ENCODE measurements at regions of chr3 and their contacts with region 1.

Region 1: DNA sequence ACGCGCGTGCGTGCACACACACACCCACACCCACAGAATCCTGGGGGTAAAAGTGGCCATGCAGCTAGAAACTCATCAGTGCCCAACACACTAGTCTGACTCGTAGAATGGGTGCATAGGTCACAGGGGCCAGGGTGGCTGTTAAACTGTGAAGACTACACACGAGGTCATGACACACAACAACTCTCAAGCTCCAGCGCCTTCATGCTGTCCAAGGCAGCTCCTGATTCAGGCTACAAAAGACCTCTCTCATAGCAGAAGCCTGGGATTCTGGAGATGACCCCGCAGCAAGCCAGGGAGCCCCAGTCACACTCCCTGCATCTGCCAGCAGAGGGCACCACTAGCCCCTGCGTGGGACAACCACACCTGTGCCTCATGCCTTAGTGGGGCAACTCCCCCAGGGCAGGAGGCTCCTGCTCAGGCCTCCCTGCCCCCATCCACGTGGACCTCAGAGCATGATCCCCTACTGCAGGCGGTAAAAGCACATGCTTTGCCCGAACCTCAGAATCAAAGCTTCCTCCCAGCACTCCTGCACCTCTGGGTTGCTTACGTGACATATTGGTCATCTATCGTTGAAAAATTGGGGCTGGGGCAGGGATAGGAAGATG is 93.1 kb downstream of the LRIG1 start:
- DNase-seq: peak; percentile 76 to 97
- H3K4me3 ChIP-seq: no peak overlapping the region
- H3K27ac ChIP-seq: no peak overlapping the region
- H3K4me1 ChIP-seq: peaks cover 0 to 12% (median 7%) of the 10 kb centered on the region in 4 experiments; a peak in 4 of 7 replicates
- H3K27me3 ChIP-seq: no peaks in the 10 kb centered on the region
- CTCF ChIP-seq: peak in 2 of 3 experiments; percentile 86 to 94; a peak in 3 of 4 replicates
- EP300 ChIP-seq: no peak
- POLR2A ChIP-seq: no peak
- RAD21 ChIP-seq: peak; percentile 92 to 93

Region 2: GRCh38 chr3:66362541-66362941 is 45.2 kb before region 1 on chr3:
- CTCF ChIA-PET with region 1: no interaction called
- POLR2A ChIA-PET with region 1: no interaction called
- DNase-seq: no peak
- H3K4me3 ChIP-seq: no peak overlapping the region
- H3K27ac ChIP-seq: no peak overlapping the region
- H3K4me1 ChIP-seq: peaks cover 3 to 11% (median 5%) of the 10 kb centered on the region in 4 experiments; a peak in 5 of 7 replicates
- H3K27me3 ChIP-seq: no peaks in the 10 kb centered on the region
- CTCF ChIP-seq: no peak
- EP300 ChIP-seq: no peak
- POLR2A ChIP-seq: no peak
- RAD21 ChIP-seq: no peak

Region 3: GRCh38 chr3:66378256-66378823 is 29.4 kb before region 1 on chr3:
- CTCF ChIA-PET with region 1: interaction called, 11 read pairs
- POLR2A ChIA-PET with region 1: no interaction called
- DNase-seq: peak in 1 of 2 experiments; percentile 15
- H3K4me3 ChIP-seq: no peak overlapping the region
- H3K27ac ChIP-seq: no peak overlapping the region
- H3K4me1 ChIP-seq: no peaks in the 10 kb centered on the region
- H3K27me3 ChIP-seq: no peaks in the 10 kb centered on the region
- CTCF ChIP-seq: peak; percentile 48 to 66 (median 53)
- EP300 ChIP-seq: no peak
- POLR2A ChIP-seq: peak in 1 of 2 experiments; percentile 32; a peak in 1 of 3 replicates
- RAD21 ChIP-seq: peak; percentile 38

Region 4: DNA sequence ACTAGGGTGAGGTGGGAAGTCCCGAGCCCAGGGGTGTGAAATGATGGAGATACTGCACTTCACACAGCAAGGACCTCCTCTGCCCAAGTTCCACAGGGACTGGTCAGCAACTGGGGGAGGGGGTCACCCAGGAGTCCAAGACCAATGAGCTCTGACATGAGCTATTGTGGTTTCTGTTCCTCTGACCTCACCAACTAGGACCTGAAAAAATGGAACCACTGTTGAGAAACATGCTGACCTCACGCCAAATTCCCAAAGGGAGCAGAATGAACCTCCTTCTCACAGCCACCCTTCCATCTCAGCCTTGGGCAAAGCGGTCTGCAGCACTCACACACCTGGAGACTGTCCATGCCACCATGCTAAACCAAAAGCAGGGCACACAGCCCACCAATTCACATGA is 23.8 kb after region 1 on chr3:
- CTCF ChIA-PET with region 1: interaction called, 14 read pairs
- POLR2A ChIA-PET with region 1: interaction called, 4 read pairs
- DNase-seq: no peak
- H3K4me3 ChIP-seq: no peak overlapping the region
- H3K27ac ChIP-seq: no peak overlapping the region
- H3K4me1 ChIP-seq: peaks cover under 1 to 21% (median 19%) of the 10 kb centered on the region in 4 experiments
- H3K27me3 ChIP-seq: no peaks in the 10 kb centered on the region
- CTCF ChIP-seq: no peak
- EP300 ChIP-seq: no peak
- POLR2A ChIP-seq: peak in 1 of 2 experiments; percentile 1; a peak in 1 of 3 replicates
- RAD21 ChIP-seq: no peak

Region 5: DNA sequence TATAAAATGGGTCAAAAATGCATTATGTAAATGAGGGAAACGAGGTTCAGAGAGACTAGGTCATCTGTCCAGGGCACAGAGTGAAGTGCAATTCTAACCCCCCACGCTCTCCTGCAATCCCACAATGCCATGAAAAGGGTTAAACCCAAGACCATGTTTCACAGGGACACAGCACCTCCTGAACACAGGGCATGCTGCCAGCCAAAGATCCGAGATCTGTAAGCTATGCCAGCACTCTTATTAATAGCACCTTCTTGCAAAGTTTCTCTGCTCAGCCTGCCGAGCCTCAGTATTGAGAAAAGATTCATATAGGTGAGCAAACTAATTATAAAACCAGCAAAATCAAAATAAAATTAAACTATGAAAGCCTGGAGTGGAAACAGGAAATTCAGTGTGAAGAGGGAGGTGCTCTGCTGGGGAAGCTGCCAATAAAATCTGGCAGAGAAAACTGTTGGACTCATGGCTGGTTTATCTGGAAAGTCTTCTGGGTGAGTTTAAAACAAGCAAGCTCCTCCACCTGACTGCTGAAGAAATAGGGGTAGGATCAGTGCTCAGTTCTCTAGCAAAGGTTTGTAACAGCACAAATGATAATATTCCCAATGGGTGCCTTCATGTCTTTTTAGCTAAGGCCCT is 42.8 kb after region 1 on chr3:
- CTCF ChIA-PET with region 1: interaction called, 32 read pairs
- POLR2A ChIA-PET with region 1: no interaction called
- DNase-seq: no peak
- H3K4me3 ChIP-seq: no peak overlapping the region
- H3K27ac ChIP-seq: no peak overlapping the region
- H3K4me1 ChIP-seq: peaks cover 0 to 14% (median 13%) of the 10 kb centered on the region in 4 experiments; a peak in 6 of 7 replicates
- H3K27me3 ChIP-seq: no peaks in the 10 kb centered on the region
- CTCF ChIP-seq: no peak
- EP300 ChIP-seq: no peak
- POLR2A ChIP-seq: no peak
- RAD21 ChIP-seq: no peak

Region 6: DNA sequence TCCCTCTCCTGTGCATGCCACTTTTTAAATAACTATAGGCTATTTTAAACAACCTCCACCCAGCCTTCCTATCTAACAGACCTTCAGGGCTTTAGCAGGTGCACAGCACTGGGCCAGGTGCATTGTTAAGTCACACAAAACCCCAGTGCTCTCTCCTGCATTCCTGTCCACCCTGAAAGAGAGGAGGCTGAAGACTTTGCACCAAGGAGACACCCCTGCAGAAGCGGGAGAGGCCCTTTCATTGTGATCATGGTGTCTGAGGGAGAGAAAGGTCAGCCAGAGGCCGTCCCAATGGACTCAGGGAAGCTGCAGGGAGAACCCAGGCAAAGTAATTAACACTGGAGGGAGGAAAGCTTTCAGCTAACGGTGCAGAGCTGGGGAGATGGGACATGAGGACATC is 87.9 kb after region 1 on chr3:
- CTCF ChIA-PET with region 1: interaction called, 19 read pairs
- POLR2A ChIA-PET with region 1: interaction called, 5 read pairs
- DNase-seq: no peak
- H3K4me3 ChIP-seq: peak overlapping the region in 2 of 4 experiments; percentile 0 to 90; a peak in 4 of 8 replicates
- H3K27ac ChIP-seq: no peak overlapping the region
- H3K4me1 ChIP-seq: peaks cover 9 to 40% (median 29%) of the 10 kb centered on the region in 4 experiments
- H3K27me3 ChIP-seq: no peaks in the 10 kb centered on the region
- CTCF ChIP-seq: no peak
- EP300 ChIP-seq: peak in 1 of 2 experiments; percentile 77; a peak in 1 of 3 replicates
- POLR2A ChIP-seq: no peak; a peak in 1 of 3 replicates
- RAD21 ChIP-seq: no peak

Region 7: DNA sequence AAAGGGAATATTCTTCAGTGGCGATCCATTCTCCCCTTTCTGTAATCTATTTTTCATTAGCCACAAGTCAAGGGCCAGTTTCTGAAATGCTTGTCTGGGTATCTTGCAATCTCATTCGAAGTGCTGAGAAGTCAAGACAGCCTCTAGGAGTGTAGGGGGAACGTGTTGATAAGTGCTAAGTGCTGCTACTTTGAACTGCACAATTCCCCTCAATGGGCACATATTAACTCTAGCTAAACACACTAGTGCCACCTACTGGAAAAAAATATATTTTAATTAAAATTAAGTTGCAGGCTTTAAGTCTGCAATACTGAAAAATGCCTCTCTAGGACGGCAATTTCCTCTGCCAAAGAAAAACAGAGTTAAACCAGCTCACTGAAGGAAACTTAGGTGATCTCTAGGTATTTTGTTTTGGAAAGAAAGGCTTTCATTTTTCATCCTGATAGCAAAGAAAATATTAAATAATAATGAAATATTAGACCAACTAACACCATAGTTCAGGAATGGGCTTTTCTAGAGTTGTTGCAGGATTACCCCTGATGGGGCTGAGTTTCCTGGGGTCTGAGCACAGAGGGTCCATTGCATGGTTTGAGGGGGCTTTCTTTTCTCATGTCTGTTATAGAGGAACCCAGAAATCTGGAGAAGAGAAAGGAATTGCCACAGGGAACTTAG is 408.5 kb after region 1 on chr3:
- CTCF ChIA-PET with region 1: interaction called, 42 read pairs
- POLR2A ChIA-PET with region 1: no interaction called
- DNase-seq: peak in 1 of 2 experiments; percentile 27
- H3K4me3 ChIP-seq: no peak overlapping the region
- H3K27ac ChIP-seq: no peak overlapping the region
- H3K4me1 ChIP-seq: peaks cover 1 to 11% (median 7%) of the 10 kb centered on the region in 4 experiments; a peak in 5 of 7 replicates
- H3K27me3 ChIP-seq: no peaks in the 10 kb centered on the region
- CTCF ChIP-seq: peak in 2 of 3 experiments; percentile 39 to 60; a peak in 3 of 4 replicates
- EP300 ChIP-seq: no peak
- POLR2A ChIP-seq: no peak
- RAD21 ChIP-seq: peak; percentile 85 to 88